Endothelial cell of umbilical vein (primary cell): ENCODE measurements at regions of chr9 and their contacts with region 1.

Region 1: DNA sequence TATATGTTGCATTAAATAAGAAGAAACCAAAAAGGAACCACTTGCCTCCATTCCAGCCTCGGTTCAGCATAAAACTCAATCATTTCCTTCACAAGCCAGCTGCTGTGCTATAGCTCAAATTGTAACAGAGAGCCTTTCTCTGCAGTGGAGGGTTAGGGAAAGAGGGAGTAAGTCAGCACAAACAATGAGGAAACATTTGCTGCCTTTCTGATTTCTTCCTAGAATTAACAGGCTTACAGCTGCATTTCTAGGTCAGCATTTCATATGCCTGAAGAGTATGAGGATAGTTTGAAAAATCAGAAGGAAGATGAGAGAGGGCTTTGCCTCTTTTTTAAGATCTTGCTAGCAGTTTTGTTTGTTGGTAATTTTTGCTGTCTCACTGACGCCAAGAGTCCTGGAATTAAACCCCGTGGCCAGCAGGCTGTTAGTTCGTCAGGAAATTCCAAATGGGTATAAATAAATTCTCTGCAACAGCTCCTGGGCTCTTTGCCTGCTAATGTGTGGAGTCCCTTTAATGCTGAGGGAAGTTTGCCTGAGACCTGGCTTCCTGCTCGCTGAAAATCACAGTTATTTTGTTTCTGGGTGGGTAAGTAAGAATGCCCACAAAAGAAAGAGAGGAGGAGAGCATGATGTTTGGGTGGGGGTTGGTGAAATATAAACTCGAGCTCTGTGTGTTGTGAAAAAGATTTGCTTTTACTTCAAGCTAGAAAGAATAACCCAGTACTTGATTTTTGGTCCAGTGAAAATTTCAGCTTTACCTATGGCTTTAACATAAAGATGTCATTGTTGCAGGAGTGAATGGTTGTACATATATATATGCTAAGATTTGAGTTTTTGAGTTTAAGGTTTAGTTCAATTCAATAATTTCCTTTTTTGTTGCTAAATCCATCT is 148.1 kb upstream of the DMRT1 start:
- DNase-seq: peak; percentile 92
- H3K4me3 ChIP-seq: peak overlapping the region in 2 of 3 experiments; percentile 18 to 67
- H3K27ac ChIP-seq: peak overlapping the region; percentile 86
- H3K4me1 ChIP-seq: peaks cover 66% of the 10 kb centered on the region
- H3K27me3 ChIP-seq: no peaks in the 10 kb centered on the region
- CTCF ChIP-seq: no peak
- POLR2A ChIP-seq: peak; percentile 72

Region 2: GRCh38 chr9:530681-531080 is 162.8 kb before region 1 on chr9:
- CTCF ChIA-PET with region 1: no interaction called
- POLR2A ChIA-PET with region 1: no interaction called
- dilution Hi-C with region 1: no loop called
- intact Hi-C with region 1: no loop called
- DNase-seq: no peak
- H3K4me3 ChIP-seq: no peak overlapping the region
- H3K27ac ChIP-seq: no peak overlapping the region
- H3K4me1 ChIP-seq: no peaks in the 10 kb centered on the region
- H3K27me3 ChIP-seq: peaks cover 0 to 2% of the 10 kb centered on the region in 2 experiments
- CTCF ChIP-seq: no peak
- POLR2A ChIP-seq: no peak

Region 3: DNA sequence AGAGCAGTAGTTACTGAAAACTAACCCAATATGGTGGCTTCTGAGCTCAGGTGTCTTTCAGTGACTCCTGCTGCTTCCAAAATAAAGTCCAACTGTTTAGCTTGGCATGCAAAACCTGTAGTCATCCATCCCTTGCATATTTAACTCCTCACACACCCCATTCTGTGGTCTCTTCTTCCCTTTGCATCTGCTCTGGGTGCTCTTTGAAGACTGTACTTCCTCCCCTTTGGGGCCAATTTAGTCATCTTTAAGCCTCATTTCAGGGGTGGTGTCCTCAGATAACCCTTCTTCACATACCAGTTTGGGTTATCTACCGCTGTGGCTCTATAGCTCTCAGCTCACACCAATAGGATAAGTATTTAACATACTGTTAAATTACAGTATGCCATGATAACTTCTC is 61.9 kb before region 1 on chr9:
- CTCF ChIA-PET with region 1: no interaction called
- POLR2A ChIA-PET with region 1: no interaction called
- dilution Hi-C with region 1: no loop called
- intact Hi-C with region 1: no loop called
- DNase-seq: no peak
- H3K4me3 ChIP-seq: no peak overlapping the region
- H3K27ac ChIP-seq: no peak overlapping the region
- H3K4me1 ChIP-seq: no peaks in the 10 kb centered on the region
- H3K27me3 ChIP-seq: no peaks in the 10 kb centered on the region
- CTCF ChIP-seq: no peak
- POLR2A ChIP-seq: no peak

Region 4: GRCh38 chr9:706606-707459 is 13.4 kb after region 1 on chr9:
- CTCF ChIA-PET with region 1: interaction called, 14 read pairs
- POLR2A ChIA-PET with region 1: interaction called, 6 read pairs
- dilution Hi-C with region 1: no loop called
- intact Hi-C with region 1: loop called (anchors 1 kb)
- DNase-seq: peak; percentile 68
- H3K4me3 ChIP-seq: peak overlapping the region; percentile 2 to 81 (median 41)
- H3K27ac ChIP-seq: peak overlapping the region; percentile 86
- H3K4me1 ChIP-seq: peaks cover 25% of the 10 kb centered on the region
- H3K27me3 ChIP-seq: no peaks in the 10 kb centered on the region
- CTCF ChIP-seq: no peak
- POLR2A ChIP-seq: no peak

Region 5: GRCh38 chr9:734831-735511 is 41.5 kb after region 1 on chr9:
- CTCF ChIA-PET with region 1: interaction called, 4 read pairs
- POLR2A ChIA-PET with region 1: interaction called, 4 read pairs
- dilution Hi-C with region 1: no loop called
- intact Hi-C with region 1: loop called (anchors 2 kb)
- DNase-seq: peak; percentile 98
- H3K4me3 ChIP-seq: no peak overlapping the region
- H3K27ac ChIP-seq: peak overlapping the region; percentile 19
- H3K4me1 ChIP-seq: peaks cover 12% of the 10 kb centered on the region
- H3K27me3 ChIP-seq: no peaks in the 10 kb centered on the region
- CTCF ChIP-seq: no peak
- POLR2A ChIP-seq: no peak

Region 6: DNA sequence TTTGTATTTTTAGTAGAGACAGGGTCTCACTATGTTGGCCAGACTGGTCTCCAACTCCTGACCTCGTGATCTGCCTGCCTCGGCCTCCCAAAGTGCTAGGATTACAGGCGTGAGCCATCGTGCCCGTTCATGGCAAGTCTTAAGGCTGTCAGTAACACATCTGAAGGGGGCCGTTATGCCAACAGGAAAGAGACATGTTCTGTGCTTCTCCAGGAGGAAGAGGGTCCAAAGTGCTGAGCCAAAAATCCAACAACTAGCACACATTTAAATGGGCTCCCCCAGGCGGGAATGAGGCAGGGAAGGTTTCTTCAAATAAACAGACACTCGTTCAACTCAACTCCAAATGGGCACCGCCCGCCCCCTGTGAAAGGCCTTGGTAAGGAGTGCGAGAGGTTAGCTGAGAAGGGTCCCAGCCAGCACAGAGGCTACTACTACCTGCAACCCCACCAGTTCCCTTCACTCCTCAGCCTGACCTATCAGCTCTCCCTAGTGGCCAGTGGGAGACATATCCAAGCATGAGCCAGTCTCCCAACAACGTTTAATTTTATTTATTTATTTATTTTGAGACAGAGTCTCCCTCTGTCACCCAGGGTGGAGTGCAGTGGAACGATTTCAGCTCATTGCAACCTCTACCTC is 63.9 kb after region 1 on chr9:
- CTCF ChIA-PET with region 1: interaction called, 19 read pairs
- POLR2A ChIA-PET with region 1: interaction called, 4 read pairs
- dilution Hi-C with region 1: no loop called
- intact Hi-C with region 1: loop called (anchors 2 kb)
- DNase-seq: peak; percentile 67
- H3K4me3 ChIP-seq: no peak overlapping the region
- H3K27ac ChIP-seq: no peak overlapping the region
- H3K4me1 ChIP-seq: peaks cover 24% of the 10 kb centered on the region
- H3K27me3 ChIP-seq: no peaks in the 10 kb centered on the region
- CTCF ChIP-seq: peak; percentile 42 to 66
- POLR2A ChIP-seq: no peak